Activated CD4-positive, alpha-beta memory T cell treated with anti-CD3 and anti-CD28 coated beads for 36 hours (primary cell): ENCODE measurements at regions of chr5 and their contacts with region 1.

Region 1: DNA sequence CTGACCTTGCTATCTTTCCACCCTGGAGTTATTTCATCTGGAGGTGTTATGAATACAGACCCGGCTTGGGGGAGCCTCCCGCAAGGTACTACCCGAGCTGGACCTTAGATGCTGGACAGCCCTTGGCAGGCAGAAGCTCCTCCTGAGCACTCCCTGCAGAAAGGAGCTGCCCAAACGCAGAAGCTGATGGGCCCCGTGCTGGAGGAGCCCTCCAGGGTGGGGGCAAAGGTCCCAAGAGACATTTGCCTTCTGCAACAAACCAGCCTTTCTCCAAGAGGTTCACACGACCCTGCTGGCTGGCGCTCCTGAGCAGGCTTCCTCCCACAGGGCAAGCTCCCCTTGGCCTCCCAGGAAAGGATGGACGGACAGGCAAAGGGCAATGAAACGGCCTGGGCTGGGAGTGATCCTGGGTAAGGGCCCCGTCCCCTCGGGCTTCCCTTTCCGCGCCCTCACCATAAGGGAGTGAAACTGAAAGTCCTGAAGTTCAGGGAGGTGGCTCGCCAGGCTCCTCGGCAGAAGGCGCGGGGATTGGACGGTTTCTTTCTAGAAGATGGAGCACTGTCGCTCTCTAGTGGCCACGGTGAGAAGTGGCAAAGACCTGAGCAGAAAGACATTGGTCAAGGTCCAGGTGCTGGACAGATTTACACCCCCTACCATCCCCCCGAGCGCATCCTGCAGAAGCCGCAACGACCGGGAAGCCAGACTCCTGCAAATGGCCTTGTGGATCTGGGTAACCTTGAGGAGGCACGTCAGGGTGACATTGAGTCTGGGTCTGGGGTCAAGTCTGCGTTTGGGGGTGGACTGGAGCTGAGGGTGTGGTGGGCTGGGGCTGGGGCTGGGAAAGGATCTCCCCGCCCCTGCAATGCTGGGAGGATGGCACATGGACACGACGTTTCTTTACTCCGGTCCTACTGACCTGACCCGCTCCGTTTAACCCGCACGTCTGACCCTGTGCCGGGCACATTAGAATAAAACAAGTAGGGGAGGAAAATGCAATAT is 56.4 kb downstream of the NEURL1B start:
- DNase-seq: peak; percentile 88
- H3K4me3 Mint-ChIP-seq: peak overlapping the region; percentile 76
- H3K27ac Mint-ChIP-seq: peak overlapping the region; percentile 54
- H3K4me1 Mint-ChIP-seq: peaks cover 13% of the 10 kb centered on the region
- H3K27me3 Mint-ChIP-seq: peaks cover 12% of the 10 kb centered on the region

Region 2: DNA sequence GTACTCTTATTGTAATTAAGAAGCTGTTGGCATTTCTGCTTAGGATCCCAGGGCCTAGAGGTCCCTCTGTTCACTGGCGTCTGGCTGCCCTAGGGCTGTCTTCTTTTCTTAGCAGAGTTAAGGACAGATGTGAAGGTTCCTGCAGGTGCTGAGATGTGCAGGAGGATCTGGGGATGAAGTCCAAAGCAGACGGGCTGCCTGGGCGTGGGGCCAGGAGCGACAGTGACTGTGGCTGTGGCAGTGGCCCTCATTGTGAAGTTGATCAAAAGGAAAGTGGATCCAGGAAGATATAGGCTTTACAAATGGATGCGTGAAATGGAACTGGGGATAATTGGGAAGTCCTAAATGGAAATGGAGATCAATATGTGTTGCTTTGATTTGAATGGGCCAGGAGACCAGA is 224.0 kb before region 1 on chr5:
- CTCF ChIA-PET with region 1: interaction called, 23 read pairs
- POLR2A ChIA-PET with region 1: no interaction called
- intact Hi-C with region 1: no loop called
- DNase-seq: no peak
- H3K4me3 Mint-ChIP-seq: no peak overlapping the region
- H3K27ac Mint-ChIP-seq: no peak overlapping the region
- H3K4me1 Mint-ChIP-seq: no peaks in the 10 kb centered on the region
- H3K27me3 Mint-ChIP-seq: peaks cover 10% of the 10 kb centered on the region

Region 3: DNA sequence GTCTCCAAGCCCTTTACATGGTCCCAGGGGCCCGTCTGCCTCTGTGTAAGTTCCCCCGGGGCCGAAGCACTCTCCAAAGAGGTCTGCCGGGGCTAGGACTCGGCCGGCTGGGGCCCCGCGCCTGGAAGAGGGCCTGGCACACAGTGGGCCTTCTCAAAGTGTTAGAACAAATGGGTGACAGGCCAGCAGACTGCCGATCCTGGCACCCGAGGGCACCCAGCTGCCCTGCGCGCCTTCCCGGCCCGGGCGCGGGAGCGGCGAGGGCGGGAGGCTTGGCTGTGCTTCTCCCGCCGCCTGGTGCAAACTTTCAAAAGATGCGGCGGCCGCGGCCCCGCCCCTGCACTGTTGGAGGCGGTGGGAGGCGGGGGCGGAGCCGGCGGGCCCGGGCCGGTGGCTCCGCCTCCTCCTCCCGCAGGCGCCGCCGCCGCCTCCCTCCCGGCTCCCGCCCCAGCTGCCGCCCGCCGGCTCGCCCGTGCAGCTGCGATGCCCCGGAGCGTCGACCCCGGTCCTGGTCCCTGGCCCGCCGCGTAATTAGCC is 56.5 kb before region 1 on chr5 and contains the start of gene NEURL1B:
- CTCF ChIA-PET with region 1: interaction called, 3 read pairs
- POLR2A ChIA-PET with region 1: no interaction called
- intact Hi-C with region 1: loop called (anchors 5 kb)
- DNase-seq: peak; percentile 62
- H3K4me3 Mint-ChIP-seq: peak within 1 kb of the TSS; percentile 44
- H3K27ac Mint-ChIP-seq: no peak within 1 kb of the TSS
- H3K4me1 Mint-ChIP-seq: no peaks in the 10 kb centered on the region
- H3K27me3 Mint-ChIP-seq: peaks cover 34% of the 10 kb centered on the region
- total RNA-seq, gene NEURL1B: 0.29 to 0.38 TPM

Region 4: DNA sequence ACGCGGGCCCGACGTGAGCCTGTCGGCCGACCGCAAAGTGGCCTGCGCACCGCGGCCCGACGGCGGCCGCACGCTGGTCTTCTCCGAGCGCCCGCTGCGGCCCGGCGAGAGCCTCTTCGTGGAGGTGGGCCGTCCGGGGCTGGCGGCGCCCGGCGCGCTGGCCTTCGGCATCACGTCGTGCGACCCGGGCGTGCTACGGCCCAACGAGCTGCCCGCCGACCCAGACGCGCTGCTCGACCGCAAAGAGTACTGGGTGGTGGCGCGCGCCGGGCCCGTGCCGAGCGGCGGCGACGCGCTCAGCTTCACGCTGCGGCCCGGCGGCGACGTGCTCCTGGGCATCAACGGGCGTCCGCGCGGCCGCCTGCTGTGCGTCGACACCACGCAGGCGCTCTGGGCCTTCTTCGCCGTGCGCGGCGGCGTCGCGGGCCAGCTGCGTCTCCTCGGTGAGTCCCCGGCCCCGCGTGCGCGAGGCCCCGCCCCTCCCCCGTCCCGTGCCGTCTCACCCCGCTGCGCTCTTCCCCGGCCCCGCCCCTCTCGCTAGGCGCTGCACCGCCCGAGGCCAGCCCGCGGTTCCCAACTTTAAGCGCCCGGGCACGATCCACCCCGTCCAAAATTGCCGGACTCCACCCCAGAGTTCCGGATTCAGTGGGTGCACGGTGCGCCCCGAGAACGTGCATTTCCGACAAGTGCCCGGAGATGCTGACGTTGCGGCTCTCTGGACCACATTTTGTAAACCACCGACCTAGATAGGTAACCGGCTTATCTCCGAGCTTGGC is 13.5 kb before region 1 on chr5:
- CTCF ChIA-PET with region 1: interaction called, 19 read pairs
- POLR2A ChIA-PET with region 1: no interaction called
- intact Hi-C with region 1: no loop called
- DNase-seq: peak; percentile 70
- H3K4me3 Mint-ChIP-seq: peak overlapping the region; percentile 62
- H3K27ac Mint-ChIP-seq: no peak overlapping the region
- H3K4me1 Mint-ChIP-seq: peaks cover 13% of the 10 kb centered on the region
- H3K27me3 Mint-ChIP-seq: peaks cover 3% of the 10 kb centered on the region